ENCODE measurements at regions of chr9 and their contacts with region 1.

Region 1: GRCh38 chr9:95336281-95336680 is 18.8 kb upstream of the FANCC start:
- DNase-seq: peak; percentile 4
- H3K4me3 ChIP-seq: no peak overlapping the region
- H3K27ac ChIP-seq: no peak overlapping the region
- H3K4me1 ChIP-seq: no peaks in the 10 kb centered on the region
- H3K27me3 ChIP-seq: no peaks in the 10 kb centered on the region
- CTCF ChIP-seq: peak; percentile 57 to 58
- POLR2A ChIP-seq: no peak

Region 2: GRCh38 chr9:95349091-95350038 is 13.1 kb after region 1 on chr9:
- CTCF ChIA-PET with region 1: interaction called, 14 read pairs
- POLR2A ChIA-PET with region 1: no interaction called
- dilution Hi-C with region 1: no loop called
- intact Hi-C with region 1: no loop called
- DNase-seq: no peak
- H3K4me3 ChIP-seq: peak overlapping the region in 1 of 3 experiments; percentile 23
- H3K27ac ChIP-seq: no peak overlapping the region
- H3K4me1 ChIP-seq: peaks cover 4% of the 10 kb centered on the region
- H3K27me3 ChIP-seq: peaks cover 12 to 18% of the 10 kb centered on the region in 2 experiments
- CTCF ChIP-seq: no peak
- POLR2A ChIP-seq: no peak

Region 3: DNA sequence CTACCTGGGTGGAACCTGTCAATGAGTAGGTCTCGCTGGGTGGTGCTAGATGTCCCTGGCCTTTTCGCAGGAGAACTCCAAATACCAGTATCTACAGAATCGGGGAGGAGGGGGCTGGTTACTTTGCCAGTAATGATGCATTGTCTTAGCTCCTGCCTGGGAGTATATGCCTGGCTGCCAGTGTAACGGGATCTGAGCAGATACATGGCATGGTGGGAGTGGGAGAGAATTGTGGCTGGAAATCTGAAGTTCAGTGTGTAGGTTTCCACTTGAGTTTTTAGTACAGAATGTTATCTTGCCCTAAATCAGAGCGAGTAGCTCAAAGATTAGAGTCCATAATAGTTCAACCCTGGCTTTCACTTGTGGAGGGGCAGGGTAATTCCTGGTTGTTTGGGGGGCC is 19.2 kb after region 1 on chr9:
- CTCF ChIA-PET with region 1: interaction called, 14 read pairs
- POLR2A ChIA-PET with region 1: no interaction called
- dilution Hi-C with region 1: no loop called
- intact Hi-C with region 1: no loop called
- DNase-seq: no peak
- H3K4me3 ChIP-seq: no peak overlapping the region
- H3K27ac ChIP-seq: no peak overlapping the region
- H3K4me1 ChIP-seq: no peaks in the 10 kb centered on the region
- H3K27me3 ChIP-seq: peaks cover 4 to 6% of the 10 kb centered on the region in 2 experiments
- CTCF ChIP-seq: no peak
- POLR2A ChIP-seq: no peak

Region 4: DNA sequence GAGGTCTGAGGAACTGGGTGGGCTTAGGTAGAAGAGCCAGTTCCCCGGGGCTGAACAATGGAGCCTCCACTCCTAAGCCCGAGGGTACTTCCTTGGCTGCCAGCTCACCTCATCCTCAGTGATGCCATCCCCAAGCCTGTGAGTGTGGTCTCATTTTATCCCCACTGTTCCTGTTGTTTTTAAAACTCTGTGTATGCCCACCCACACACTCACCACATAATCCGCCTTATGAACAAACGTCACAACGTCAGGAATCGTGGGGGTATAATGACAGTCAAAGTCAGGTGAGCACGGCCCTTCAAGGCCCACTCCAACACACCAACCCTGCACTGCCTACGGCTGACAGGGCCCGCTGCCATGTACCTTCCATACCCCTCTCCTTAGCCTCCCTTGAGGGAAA is 119.4 kb after region 1 on chr9:
- CTCF ChIA-PET with region 1: no interaction called
- POLR2A ChIA-PET with region 1: no interaction called
- dilution Hi-C with region 1: no loop called
- intact Hi-C with region 1: no loop called
- DNase-seq: no peak
- H3K4me3 ChIP-seq: no peak overlapping the region
- H3K27ac ChIP-seq: no peak overlapping the region
- H3K4me1 ChIP-seq: no peaks in the 10 kb centered on the region
- H3K27me3 ChIP-seq: no peaks in the 10 kb centered on the region
- CTCF ChIP-seq: no peak
- POLR2A ChIP-seq: no peak